Activated naive CD8-positive, alpha-beta T cell treated with anti-CD3 and anti-CD28 coated beads, Interleukin-2, amount 10 ng/mL, durations not matched to agents 7 days and 5 days (primary cell): ENCODE measurements at regions of chr1 and their contacts with region 1.

Region 1: DNA sequence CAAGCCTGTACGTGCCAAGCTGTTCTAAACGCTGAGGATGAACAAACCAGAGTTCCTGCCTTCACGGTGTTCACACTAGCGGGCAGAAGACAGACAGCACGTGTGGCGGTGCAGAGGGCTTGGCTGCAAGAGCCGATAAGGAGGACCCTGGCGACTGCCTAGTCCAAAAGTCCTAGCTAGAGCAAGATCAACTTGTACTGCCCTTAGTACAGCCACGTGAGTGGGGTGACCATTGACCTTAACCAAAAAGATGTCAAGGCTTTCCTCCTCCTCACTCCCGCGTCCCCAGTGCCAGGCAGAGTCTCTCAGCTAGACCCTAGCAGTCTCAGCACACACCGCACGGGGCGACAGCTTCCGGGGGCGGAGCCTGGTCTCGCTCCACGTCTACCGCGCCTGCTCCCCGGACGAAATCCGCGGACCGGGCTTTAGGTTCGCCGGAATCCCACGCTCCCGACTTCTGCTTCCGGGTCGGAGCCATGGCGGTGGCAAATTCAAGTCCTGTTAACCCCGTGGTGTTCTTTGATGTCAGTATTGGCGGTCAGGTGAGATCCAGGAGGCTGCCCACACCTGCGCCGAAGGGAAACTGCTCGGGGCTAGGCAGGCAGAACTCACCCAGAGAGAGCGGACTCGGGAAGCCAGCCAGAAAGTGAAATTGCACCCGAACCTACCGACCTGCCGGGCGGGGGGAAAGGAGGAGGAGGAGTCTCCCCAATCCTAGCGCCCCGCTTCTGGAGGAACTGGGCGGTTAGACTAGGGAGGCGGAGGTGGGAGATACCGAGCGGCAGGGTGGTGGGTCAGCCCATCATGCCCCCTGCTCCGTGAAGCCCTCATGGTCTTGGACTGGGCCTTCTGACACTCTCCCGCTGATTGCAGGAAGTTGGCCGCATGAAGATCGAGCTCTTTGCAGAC is at the start of gene PPIH:
- DNase-seq: peak; percentile 94
- ATAC-seq: peak; percentile 97
- H3K4me3 Mint-ChIP-seq: peak within 1 kb of the TSS; percentile 94
- H3K27ac Mint-ChIP-seq: peak within 1 kb of the TSS; percentile 94
- H3K4me1 Mint-ChIP-seq: peaks cover 34% of the 10 kb centered on the region
- H3K27me3 Mint-ChIP-seq: no peaks in the 10 kb centered on the region
- total RNA-seq, gene PPIH: 90.3 to 98.6 TPM

Region 2: GRCh38 chr1:42681741-42682483 is 23.7 kb after region 1 on chr1 and contains the start of gene YBX1:
- POLR2A ChIA-PET with region 1: interaction called, 42 read pairs
- DNase-seq: peak; percentile 92
- ATAC-seq: peak; percentile 96
- H3K4me3 Mint-ChIP-seq: peak within 1 kb of the TSS; percentile 95
- H3K27ac Mint-ChIP-seq: peak within 1 kb of the TSS; percentile 97
- H3K4me1 Mint-ChIP-seq: peaks cover 39% of the 10 kb centered on the region
- H3K27me3 Mint-ChIP-seq: no peaks in the 10 kb centered on the region
- total RNA-seq, gene YBX1: 529 to 531 TPM